ENCODE measurements at regions of chr5 and their contacts with region 1.

Region 1: GRCh38 chr5:74648835-74649293 is 8.3 kb upstream of the ENC1 start:
- DNase-seq: peak; percentile 36 to 48 (median 44)
- ATAC-seq: peak; percentile 59
- H3K4me3 ChIP-seq: no peak overlapping the region
- H3K27ac ChIP-seq: peak overlapping the region; percentile 7 to 71 (median 64)
- H3K4me1 ChIP-seq: peaks cover 50% of the 10 kb centered on the region
- H3K27me3 ChIP-seq: no peaks in the 10 kb centered on the region
- CTCF ChIP-seq: peak; percentile 59 to 92 (median 81)
- POLR2A ChIP-seq: no peak

Region 2: GRCh38 chr5:73902327-73903051 is 746.4 kb before region 1 on chr5:
- intact Hi-C with region 1: loop called (anchors 5 kb)
- DNase-seq: peak in 1 of 4 donors; percentile 19
- ATAC-seq: peak; percentile 60
- H3K4me3 ChIP-seq: no peak overlapping the region
- H3K27ac ChIP-seq: peak overlapping the region in 1 of 4 donors; percentile 44
- H3K4me1 ChIP-seq: peaks cover 19% of the 10 kb centered on the region
- H3K27me3 ChIP-seq: no peaks in the 10 kb centered on the region
- CTCF ChIP-seq: peak; percentile 52 to 99 (median 87)
- POLR2A ChIP-seq: no peak

Region 3: DNA sequence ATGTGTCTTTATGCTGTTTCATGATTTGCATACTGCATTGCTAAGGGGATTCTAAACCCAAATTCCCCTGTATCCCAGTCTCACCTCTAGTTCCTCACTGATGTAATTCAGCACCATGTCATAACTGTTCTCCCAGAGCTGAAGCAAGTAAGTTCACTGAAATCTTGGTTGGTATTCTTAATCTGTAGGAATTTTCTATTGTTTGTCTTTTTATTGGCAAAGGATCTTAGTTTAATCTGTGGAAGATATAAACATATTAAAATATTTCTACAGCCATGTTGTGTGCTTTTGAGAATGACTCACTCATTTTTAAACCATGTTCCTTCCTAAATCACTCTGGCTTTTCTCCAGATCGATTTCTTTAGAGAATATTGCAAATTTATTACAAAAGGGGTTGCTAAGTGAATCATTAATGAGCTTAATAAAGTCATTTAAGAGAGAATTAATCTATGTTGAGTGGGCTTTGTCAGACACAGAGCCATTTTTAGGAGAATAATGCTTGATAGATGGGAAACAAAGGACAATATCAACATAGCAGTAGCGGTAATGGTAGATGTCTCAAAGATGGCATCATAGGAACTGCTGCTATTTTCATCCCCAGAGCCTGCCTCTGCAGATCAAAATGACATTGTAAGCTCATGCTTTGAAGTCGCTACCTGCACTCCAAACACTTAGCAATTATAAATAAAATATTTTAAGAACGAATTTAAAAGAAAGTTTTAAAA is 118.4 kb before region 1 on chr5:
- intact Hi-C with region 1: no loop called
- DNase-seq: no peak
- ATAC-seq: no peak
- H3K4me3 ChIP-seq: no peak overlapping the region
- H3K27ac ChIP-seq: no peak overlapping the region
- H3K4me1 ChIP-seq: no peaks in the 10 kb centered on the region
- H3K27me3 ChIP-seq: no peaks in the 10 kb centered on the region
- CTCF ChIP-seq: no peak
- POLR2A ChIP-seq: no peak

Measured in body of pancreas (tissue), 4 donors.